Activated naive CD4-positive, alpha-beta T cell treated with anti-CD3 and anti-CD28 coated beads for 36 hours (primary cell): ENCODE measurements at regions of chrX and their contacts with region 1.

Region 1: GRCh38 chrX:18377796-18378195 is 23.3 kb upstream of the SCML2 start:
- DNase-seq: peak; percentile 45
- H3K4me3 Mint-ChIP-seq: no peak overlapping the region
- H3K27ac Mint-ChIP-seq: no peak overlapping the region
- H3K4me1 Mint-ChIP-seq: peaks cover 1% of the 10 kb centered on the region
- H3K27me3 Mint-ChIP-seq: no peaks in the 10 kb centered on the region

Region 2: GRCh38 chrX:17744896-17745523 is 632.8 kb before region 1 on chrX:
- CTCF ChIA-PET with region 1: interaction called, 3 read pairs
- intact Hi-C with region 1: loop called (anchors 5 kb)
- DNase-seq: no peak
- H3K4me3 Mint-ChIP-seq: no peak overlapping the region
- H3K27ac Mint-ChIP-seq: no peak overlapping the region
- H3K4me1 Mint-ChIP-seq: peaks cover 35% of the 10 kb centered on the region
- H3K27me3 Mint-ChIP-seq: no peaks in the 10 kb centered on the region

Region 3: GRCh38 chrX:17788439-17788838 is 589.4 kb before region 1 on chrX:
- CTCF ChIA-PET with region 1: no interaction called
- intact Hi-C with region 1: loop called (anchors 2 kb)
- DNase-seq: peak; percentile 59
- H3K4me3 Mint-ChIP-seq: no peak overlapping the region
- H3K27ac Mint-ChIP-seq: no peak overlapping the region
- H3K4me1 Mint-ChIP-seq: peaks cover 15% of the 10 kb centered on the region
- H3K27me3 Mint-ChIP-seq: no peaks in the 10 kb centered on the region

Region 4: DNA sequence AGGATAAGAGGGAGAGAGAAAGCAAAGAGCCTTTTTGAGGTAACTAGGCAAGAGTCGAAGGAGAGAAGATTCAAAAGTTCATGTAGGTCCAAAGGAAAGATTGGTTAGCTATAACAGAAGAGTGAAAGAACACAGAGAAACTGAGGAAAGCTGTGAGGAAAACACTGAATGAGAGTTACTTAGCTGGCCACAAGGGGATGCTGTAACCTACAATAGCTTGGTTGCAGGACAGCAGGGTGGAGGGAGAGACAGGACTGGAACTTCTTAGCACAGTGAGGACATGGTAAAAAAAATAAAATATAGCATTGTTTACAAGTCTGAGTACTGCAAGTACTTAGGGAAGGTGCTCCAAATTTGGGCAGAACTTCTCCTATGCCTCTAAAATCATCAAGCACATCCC is 565.0 kb before region 1 on chrX:
- CTCF ChIA-PET with region 1: no interaction called
- intact Hi-C with region 1: loop called (anchors 1 kb)
- DNase-seq: peak; percentile 7
- H3K4me3 Mint-ChIP-seq: no peak overlapping the region
- H3K27ac Mint-ChIP-seq: no peak overlapping the region
- H3K4me1 Mint-ChIP-seq: no peaks in the 10 kb centered on the region
- H3K27me3 Mint-ChIP-seq: no peaks in the 10 kb centered on the region

Region 5: DNA sequence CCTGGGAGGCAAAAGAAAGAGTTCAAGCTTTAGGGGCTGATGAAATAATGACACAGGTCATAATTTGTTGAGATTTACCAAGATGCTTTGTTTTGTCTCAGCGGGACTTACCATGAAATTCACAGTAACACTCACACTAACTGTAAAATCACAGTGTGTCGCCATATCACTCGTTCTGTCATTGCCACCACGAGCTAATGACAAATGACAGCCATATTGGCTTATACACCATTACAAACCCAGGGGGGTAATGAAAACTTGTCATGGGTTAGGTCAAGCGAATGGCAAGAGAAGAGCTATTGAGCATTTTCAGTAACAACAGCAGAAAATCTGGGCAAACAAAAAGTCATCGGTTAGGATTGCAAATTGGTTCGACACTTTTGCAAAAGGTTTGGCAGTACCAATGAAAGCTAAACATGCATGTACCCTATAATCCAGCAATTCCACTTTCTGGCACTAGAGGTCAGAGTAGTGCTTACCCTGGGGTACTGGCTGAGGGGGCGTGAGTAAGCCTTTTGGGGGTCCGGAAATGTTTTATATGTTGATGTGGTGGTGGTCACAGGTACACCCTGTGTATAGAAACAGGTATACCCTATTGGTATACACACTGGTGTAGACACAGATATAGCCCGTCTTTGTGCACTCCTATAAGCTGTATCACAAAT is 432.8 kb before region 1 on chrX:
- CTCF ChIA-PET with region 1: interaction called, 10 read pairs
- intact Hi-C with region 1: loop called (anchors 1 kb)
- DNase-seq: peak; percentile 23
- H3K4me3 Mint-ChIP-seq: no peak overlapping the region
- H3K27ac Mint-ChIP-seq: no peak overlapping the region
- H3K4me1 Mint-ChIP-seq: no peaks in the 10 kb centered on the region
- H3K27me3 Mint-ChIP-seq: no peaks in the 10 kb centered on the region

Region 6: GRCh38 chrX:18390941-18391538 is 13.2 kb after region 1 on chrX:
- CTCF ChIA-PET with region 1: no interaction called
- intact Hi-C with region 1: no loop called
- DNase-seq: peak; percentile 70
- H3K4me3 Mint-ChIP-seq: no peak overlapping the region
- H3K27ac Mint-ChIP-seq: no peak overlapping the region
- H3K4me1 Mint-ChIP-seq: no peaks in the 10 kb centered on the region
- H3K27me3 Mint-ChIP-seq: no peaks in the 10 kb centered on the region

Region 7: DNA sequence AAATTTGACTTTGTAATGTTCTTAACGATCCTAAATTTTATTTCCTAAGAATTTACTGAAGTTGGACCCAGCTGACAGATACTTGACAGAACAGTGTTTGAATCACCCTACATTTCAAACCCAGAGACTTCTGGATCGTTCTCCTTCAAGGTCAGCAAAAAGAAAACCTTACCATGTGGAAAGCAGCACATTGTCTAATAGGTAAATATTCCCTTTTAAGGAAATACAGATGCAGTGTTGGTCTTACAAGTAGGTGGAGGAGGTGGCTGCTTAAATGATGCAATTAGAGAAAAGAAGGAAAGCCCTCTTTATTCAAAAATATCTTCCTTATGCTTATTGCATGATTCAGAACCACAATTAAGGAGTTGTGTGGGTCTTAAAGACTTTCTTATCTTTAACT is 220.6 kb after region 1 on chrX:
- CTCF ChIA-PET with region 1: no interaction called
- intact Hi-C with region 1: no loop called
- DNase-seq: no peak
- H3K4me3 Mint-ChIP-seq: no peak overlapping the region
- H3K27ac Mint-ChIP-seq: no peak overlapping the region
- H3K4me1 Mint-ChIP-seq: no peaks in the 10 kb centered on the region
- H3K27me3 Mint-ChIP-seq: no peaks in the 10 kb centered on the region